Activated CD4-positive, alpha-beta T cell treated with anti-CD3 and anti-CD28 coated beads, Interleukin-2, amount 10 ng/mL, durations not matched to agents 7 days and 5 days (primary cell): ENCODE measurements at regions of chr12 and their contacts with region 1.

Region 1: GRCh38 chr12:119788783-119789182 is 88.3 kb downstream of the CIT start:
- DNase-seq: no peak
- H3K4me3 Mint-ChIP-seq: no peak overlapping the region
- H3K27ac Mint-ChIP-seq: no peak overlapping the region
- H3K4me1 Mint-ChIP-seq: peaks cover 2% of the 10 kb centered on the region
- H3K27me3 Mint-ChIP-seq: no peaks in the 10 kb centered on the region

Region 2: DNA sequence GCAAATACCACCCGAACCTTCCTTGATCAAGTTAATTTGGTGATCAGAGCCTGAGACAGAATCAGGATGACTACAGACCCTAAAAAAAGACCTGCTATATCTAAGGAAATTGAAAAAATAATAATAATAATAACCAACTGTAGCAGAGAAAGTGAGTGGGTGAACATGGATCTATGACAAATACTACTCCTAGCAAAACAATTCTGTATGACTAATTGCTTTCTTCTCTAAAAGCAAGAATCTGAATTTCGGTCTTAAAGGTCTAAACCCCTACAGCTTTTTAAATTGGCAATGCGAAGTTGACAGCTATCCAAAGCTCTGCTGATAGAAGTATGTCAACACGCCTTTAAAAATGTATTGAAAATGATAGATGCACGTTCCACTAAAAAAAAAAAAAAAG is 18.6 kb before region 1 on chr12:
- CTCF ChIA-PET with region 1: no interaction called
- POLR2A ChIA-PET with region 1: no interaction called
- DNase-seq: no peak
- H3K4me3 Mint-ChIP-seq: no peak overlapping the region
- H3K27ac Mint-ChIP-seq: no peak overlapping the region
- H3K4me1 Mint-ChIP-seq: no peaks in the 10 kb centered on the region
- H3K27me3 Mint-ChIP-seq: no peaks in the 10 kb centered on the region

Region 3: DNA sequence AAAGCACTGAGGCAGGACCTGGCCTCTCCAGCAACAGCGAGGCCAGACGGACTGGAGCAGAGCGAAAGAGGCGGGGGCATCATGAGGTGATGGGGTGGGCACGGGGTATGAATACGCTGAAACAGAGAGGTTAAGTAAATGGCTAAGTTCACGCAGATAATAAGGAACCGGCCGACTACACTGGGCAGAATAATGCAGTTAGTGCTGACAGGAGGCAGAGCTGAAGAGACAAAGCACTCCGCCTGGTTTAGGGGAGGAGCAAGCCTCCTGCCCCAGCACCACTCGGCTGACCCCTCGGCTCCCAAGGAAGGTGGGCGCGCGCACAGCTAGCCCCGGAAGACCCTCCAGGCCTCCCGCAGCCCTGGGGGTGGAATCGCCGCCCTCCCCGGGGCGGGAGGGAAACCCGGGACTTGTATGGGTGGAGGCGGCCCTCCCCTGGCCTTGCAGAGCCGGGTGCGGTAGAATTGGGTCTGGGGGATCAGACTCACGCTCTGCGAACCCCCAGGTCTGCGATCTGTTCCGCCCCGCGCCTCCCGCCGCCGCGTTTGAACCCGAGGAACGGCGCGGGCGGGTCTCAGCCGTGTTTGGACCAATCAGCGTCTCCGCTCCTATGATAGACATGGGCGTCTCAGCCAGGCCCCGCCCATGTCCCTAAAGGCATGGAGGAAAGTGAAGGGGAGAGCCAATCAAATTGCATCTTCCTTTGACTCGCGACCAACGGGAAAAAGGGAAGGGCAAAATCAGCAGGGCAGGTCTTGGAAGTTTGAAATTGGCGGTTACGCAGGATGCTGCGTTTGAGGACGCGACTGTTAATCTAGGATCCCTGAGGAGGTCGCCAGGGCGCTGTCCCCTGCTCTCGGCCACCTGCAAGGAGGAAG is 88.2 kb after region 1 on chr12 and contains the start of gene CIT:
- CTCF ChIA-PET with region 1: no interaction called
- POLR2A ChIA-PET with region 1: interaction called, 15 read pairs
- DNase-seq: peak; percentile 93
- H3K4me3 Mint-ChIP-seq: peak within 1 kb of the TSS; percentile 95
- H3K27ac Mint-ChIP-seq: peak within 1 kb of the TSS; percentile 73
- H3K4me1 Mint-ChIP-seq: peaks cover 29% of the 10 kb centered on the region
- H3K27me3 Mint-ChIP-seq: peaks cover 11% of the 10 kb centered on the region
- total RNA-seq, gene CIT: 113 to 132 TPM